ENCODE measurements at regions of chr19 and their contacts with region 1.

Region 1: GRCh38 chr19:40598121-40598917 is 2.9 kb upstream of the LTBP4 start:
- DNase-seq: peak; percentile 87
- ATAC-seq: peak; percentile 55
- H3K4me3 ChIP-seq: peak overlapping the region; percentile 52
- H3K27ac ChIP-seq: peak overlapping the region; percentile 46
- H3K4me1 ChIP-seq: peaks cover 16% of the 10 kb centered on the region
- H3K27me3 ChIP-seq: no peaks in the 10 kb centered on the region
- CTCF ChIP-seq: peak; percentile 99
- POLR2A ChIP-seq: peak; percentile 65
- RAD21 ChIP-seq: peak; percentile 98

Region 2: GRCh38 chr19:40139533-40140287 is 458.6 kb before region 1 on chr19:
- CTCF ChIA-PET with region 1: no interaction called
- POLR2A ChIA-PET with region 1: no interaction called
- dilution Hi-C with region 1: no loop called
- in situ Hi-C with region 1: no loop called
- intact Hi-C with region 1: loop called (anchors 10 kb)
- DNase-seq: peak; percentile 63
- ATAC-seq: peak; percentile 77
- H3K4me3 ChIP-seq: no peak overlapping the region
- H3K27ac ChIP-seq: no peak overlapping the region
- H3K4me1 ChIP-seq: no peaks in the 10 kb centered on the region
- H3K27me3 ChIP-seq: peaks cover 10% of the 10 kb centered on the region
- CTCF ChIP-seq: peak; percentile 93
- POLR2A ChIP-seq: peak; percentile 28; the same call in 1 of the 2 replicates
- RAD21 ChIP-seq: peak; percentile 94

Region 3: GRCh38 chr19:40348125-40348913 is 250.0 kb before region 1 on chr19 and contains the starts of genes C19orf47 and PLD3:
- CTCF ChIA-PET with region 1: no interaction called
- POLR2A ChIA-PET with region 1: no interaction called
- dilution Hi-C with region 1: no loop called
- in situ Hi-C with region 1: no loop called
- intact Hi-C with region 1: loop called (anchors 5 kb)
- DNase-seq: peak; percentile 99
- ATAC-seq: peak; percentile 97
- H3K4me3 ChIP-seq: peak within 1 kb of the TSS; percentile 70
- H3K27ac ChIP-seq: peak within 1 kb of the TSS; percentile 63
- H3K4me1 ChIP-seq: peaks cover 4% of the 10 kb centered on the region; the same call in 1 of the 2 replicates
- H3K27me3 ChIP-seq: no peaks in the 10 kb centered on the region
- CTCF ChIP-seq: no peak
- POLR2A ChIP-seq: peak; percentile 69
- RAD21 ChIP-seq: no peak
- total RNA-seq, gene C19orf47: 3.6 and 4.4 TPM in 2 replicates
- total RNA-seq, gene PLD3: 117 and 120 TPM in 2 replicates

Region 4: GRCh38 chr19:40444192-40445028 is 153.9 kb before region 1 on chr19 and contains the start of gene SERTAD3:
- CTCF ChIA-PET with region 1: interaction called, 3 read pairs
- POLR2A ChIA-PET with region 1: no interaction called
- dilution Hi-C with region 1: no loop called
- in situ Hi-C with region 1: no loop called
- intact Hi-C with region 1: loop called (anchors 5 kb)
- DNase-seq: peak; percentile 91
- ATAC-seq: peak; percentile 80
- H3K4me3 ChIP-seq: peak within 1 kb of the TSS; percentile 70
- H3K27ac ChIP-seq: peak within 1 kb of the TSS; percentile 95
- H3K4me1 ChIP-seq: peaks cover 2% of the 10 kb centered on the region
- H3K27me3 ChIP-seq: no peaks in the 10 kb centered on the region
- CTCF ChIP-seq: peak; percentile 38
- POLR2A ChIP-seq: peak; percentile 93
- RAD21 ChIP-seq: peak; percentile 32; the same call in 1 of the 2 replicates
- total RNA-seq, gene SERTAD3: 23.3 and 25.6 TPM in 2 replicates

Region 5: GRCh38 chr19:40523322-40524047 is 74.8 kb before region 1 on chr19:
- CTCF ChIA-PET with region 1: no interaction called
- POLR2A ChIA-PET with region 1: no interaction called
- dilution Hi-C with region 1: no loop called
- in situ Hi-C with region 1: no loop called
- intact Hi-C with region 1: loop called (anchors 1 kb)
- DNase-seq: peak; percentile 44
- ATAC-seq: peak; percentile 85
- H3K4me3 ChIP-seq: no peak overlapping the region
- H3K27ac ChIP-seq: no peak overlapping the region
- H3K4me1 ChIP-seq: no peaks in the 10 kb centered on the region
- H3K27me3 ChIP-seq: peaks cover 18% of the 10 kb centered on the region; the same call in 1 of the 2 replicates
- CTCF ChIP-seq: peak; percentile 62
- POLR2A ChIP-seq: no peak
- RAD21 ChIP-seq: peak; percentile 49

Region 6: GRCh38 chr19:40542202-40542859 is 56.0 kb before region 1 on chr19:
- CTCF ChIA-PET with region 1: interaction called, 4 read pairs
- POLR2A ChIA-PET with region 1: no interaction called
- dilution Hi-C with region 1: no loop called
- in situ Hi-C with region 1: loop called (anchors 5 kb)
- intact Hi-C with region 1: loop called (anchors 1 kb)
- DNase-seq: peak; percentile 60
- ATAC-seq: peak; percentile 75
- H3K4me3 ChIP-seq: no peak overlapping the region
- H3K27ac ChIP-seq: peak overlapping the region; percentile 32; the same call in 1 of the 2 replicates
- H3K4me1 ChIP-seq: peaks cover 4% of the 10 kb centered on the region; the same call in 1 of the 2 replicates
- H3K27me3 ChIP-seq: peaks cover 11% of the 10 kb centered on the region; the same call in 1 of the 2 replicates
- CTCF ChIP-seq: no peak
- POLR2A ChIP-seq: no peak
- RAD21 ChIP-seq: no peak